GM12878 (cell line): ENCODE measurements at regions of chr17 and their contacts with region 1.

Region 1: DNA sequence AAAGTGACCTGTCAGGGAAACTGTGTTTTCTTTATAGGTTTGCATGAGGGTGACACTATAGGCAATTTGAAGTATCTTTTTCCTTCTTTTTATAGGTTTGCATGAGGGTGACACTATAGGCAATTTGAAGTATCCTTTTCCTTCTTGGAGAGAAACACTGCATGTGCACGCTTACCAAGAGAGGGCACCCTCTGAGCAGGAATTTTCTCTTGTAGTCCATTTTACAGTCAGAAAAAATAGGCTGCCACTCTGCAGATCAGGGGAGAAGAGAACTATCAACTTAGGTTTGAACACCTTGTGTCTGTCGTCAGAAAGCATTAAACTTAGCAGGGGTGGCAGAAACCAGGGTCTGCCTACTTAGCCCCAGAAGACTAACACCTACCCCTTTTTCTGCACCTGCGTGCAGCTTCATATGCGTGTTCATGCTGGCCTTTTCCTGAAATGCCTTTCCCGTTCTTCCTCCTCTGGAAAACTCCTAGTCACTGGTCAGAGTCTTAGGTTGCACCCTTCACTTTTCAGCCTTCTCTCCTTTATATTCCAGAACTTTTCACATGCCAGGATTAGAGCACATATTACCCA is 16.4 kb upstream of the SMIM36 start:
- DNase-seq: no peak
- ATAC-seq: 0 out of 3 replicates have a peak, but pooled peaks have one; percentile 18
- H3K4me3 ChIP-seq: no peak overlapping the region
- H3K27ac ChIP-seq: no peak overlapping the region
- H3K4me1 ChIP-seq: 0 out of 2 replicates have a peak, but pooled peaks cover 3% of the 10 kb centered on the region
- H3K27me3 ChIP-seq: no peaks in the 10 kb centered on the region; a peak in 1 of 4 replicates
- CTCF ChIP-seq: peak; percentile 22 to 45 (median 44); a peak in 5 of 6 replicates
- EP300 ChIP-seq: no peak
- POLR2A ChIP-seq: no peak
- RAD21 ChIP-seq: peak; percentile 61

Region 2: GRCh38 chr17:55513885-55514591 is 13.6 kb before region 1 on chr17:
- CTCF ChIA-PET with region 1: interaction called, 29 read pairs
- POLR2A ChIA-PET with region 1: no interaction called
- RAD21 ChIA-PET with region 1: interaction called, 4 read pairs
- SMC1A ChIA-PET with region 1: interaction called, 6 read pairs
- in situ Hi-C with region 1: no loop called
- intact Hi-C with region 1: no loop called
- DNase-seq: peak; percentile 59
- ATAC-seq: peak; percentile 91
- H3K4me3 ChIP-seq: no peak overlapping the region
- H3K27ac ChIP-seq: no peak overlapping the region
- H3K4me1 ChIP-seq: no peaks in the 10 kb centered on the region
- H3K27me3 ChIP-seq: no peaks in the 10 kb centered on the region
- CTCF ChIP-seq: peak; percentile 82 to 91 (median 90)
- EP300 ChIP-seq: no peak
- POLR2A ChIP-seq: no peak
- RAD21 ChIP-seq: peak; percentile 99

Region 3: GRCh38 chr17:55607731-55608341 is 80.2 kb after region 1 on chr17:
- CTCF ChIA-PET with region 1: interaction called, 123 read pairs
- POLR2A ChIA-PET with region 1: no interaction called
- RAD21 ChIA-PET with region 1: interaction called, 3 read pairs
- SMC1A ChIA-PET with region 1: interaction called, 34 read pairs
- in situ Hi-C with region 1: loop called (anchors 5 kb)
- intact Hi-C with region 1: no loop called
- DNase-seq: no peak
- ATAC-seq: no peak
- H3K4me3 ChIP-seq: no peak overlapping the region
- H3K27ac ChIP-seq: no peak overlapping the region
- H3K4me1 ChIP-seq: no peaks in the 10 kb centered on the region
- H3K27me3 ChIP-seq: no peaks in the 10 kb centered on the region; a peak in 1 of 4 replicates
- CTCF ChIP-seq: no peak
- EP300 ChIP-seq: no peak
- POLR2A ChIP-seq: no peak
- RAD21 ChIP-seq: no peak

Region 4: GRCh38 chr17:55717898-55718735 is 190.5 kb after region 1 on chr17:
- CTCF ChIA-PET with region 1: interaction called, 43 read pairs
- POLR2A ChIA-PET with region 1: no interaction called
- RAD21 ChIA-PET with region 1: interaction called, 5 read pairs
- SMC1A ChIA-PET with region 1: interaction called, 11 read pairs
- in situ Hi-C with region 1: loop called (anchors 5 kb)
- intact Hi-C with region 1: loop called (anchors 1 kb)
- DNase-seq: no peak
- ATAC-seq: peak; percentile 71
- H3K4me3 ChIP-seq: no peak overlapping the region
- H3K27ac ChIP-seq: no peak overlapping the region
- H3K4me1 ChIP-seq: no peaks in the 10 kb centered on the region
- H3K27me3 ChIP-seq: no peaks in the 10 kb centered on the region; a peak in 1 of 4 replicates
- CTCF ChIP-seq: peak; percentile 65 to 74 (median 66); a peak in 5 of 6 replicates
- EP300 ChIP-seq: no peak
- POLR2A ChIP-seq: no peak
- RAD21 ChIP-seq: peak; percentile 67

Region 5: GRCh38 chr17:55770148-55770870 is 242.7 kb after region 1 on chr17:
- CTCF ChIA-PET with region 1: interaction called, 33 read pairs
- POLR2A ChIA-PET with region 1: no interaction called
- RAD21 ChIA-PET with region 1: interaction called, 4 read pairs
- SMC1A ChIA-PET with region 1: interaction called, 8 read pairs
- in situ Hi-C with region 1: loop called (anchors 5 kb)
- intact Hi-C with region 1: loop called (anchors 1 kb)
- DNase-seq: no peak
- ATAC-seq: no peak
- H3K4me3 ChIP-seq: no peak overlapping the region
- H3K27ac ChIP-seq: no peak overlapping the region
- H3K4me1 ChIP-seq: no peaks in the 10 kb centered on the region
- H3K27me3 ChIP-seq: no peaks in the 10 kb centered on the region
- CTCF ChIP-seq: peak; percentile 24 to 51 (median 42); a peak in 4 of 6 replicates
- EP300 ChIP-seq: no peak
- POLR2A ChIP-seq: no peak
- RAD21 ChIP-seq: peak; percentile 56; the same call in 1 of the 2 replicates